Right cardiac atrium (tissue), 5 donors: ENCODE measurements at regions of chr1 and their contacts with region 1.

Region 1: DNA sequence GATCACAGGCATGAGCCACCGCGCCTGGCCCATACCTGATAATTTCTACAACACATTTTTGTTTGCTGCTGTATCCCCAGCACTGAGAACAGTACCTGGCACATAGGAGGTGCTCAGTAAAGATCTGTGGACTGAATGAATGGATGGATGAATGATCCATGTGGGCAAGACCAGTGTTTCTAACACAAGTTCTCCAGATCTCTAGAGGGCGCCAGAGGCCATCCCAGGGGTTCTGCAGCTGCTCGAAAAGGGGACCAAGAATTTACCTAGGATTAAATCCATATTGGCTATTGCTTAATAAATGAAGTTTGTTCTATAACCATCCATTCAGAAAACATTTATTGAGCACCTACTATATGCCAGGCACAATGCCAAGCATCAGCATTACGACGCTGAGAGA is 167.7 kb downstream of the ACTL8 start:
- DNase-seq: peak; percentile 28 to 59 (median 57)
- ATAC-seq: no peak
- H3K4me3 ChIP-seq: no peak overlapping the region
- H3K27ac ChIP-seq: no peak overlapping the region
- H3K4me1 ChIP-seq: no peaks in the 10 kb centered on the region
- H3K27me3 ChIP-seq: no peaks in the 10 kb centered on the region

Region 2: GRCh38 chr1:17439250-17440073 is 483.4 kb before region 1 on chr1 and contains the start of gene RCC2:
- intact Hi-C with region 1: no loop called
- DNase-seq: peak; percentile 79 to 91 (median 90)
- ATAC-seq: peak; percentile 83 to 88
- H3K4me3 ChIP-seq: peak within 1 kb of the TSS; percentile 99
- H3K27ac ChIP-seq: peak within 1 kb of the TSS; percentile 91
- H3K4me1 ChIP-seq: no peaks in the 10 kb centered on the region
- H3K27me3 ChIP-seq: no peaks in the 10 kb centered on the region
- total RNA-seq, gene RCC2: 12.1 to 19.0 (median 14.9) TPM

Region 3: GRCh38 chr1:17671741-17672140 is 251.1 kb before region 1 on chr1:
- intact Hi-C with region 1: loop called in 1 of 4 experiments (anchors 10 kb)
- DNase-seq: peak in 1 of 3 donors; percentile 51
- ATAC-seq: no peak
- H3K4me3 ChIP-seq: no peak overlapping the region
- H3K27ac ChIP-seq: no peak overlapping the region
- H3K4me1 ChIP-seq: peaks cover 3% of the 10 kb centered on the region
- H3K27me3 ChIP-seq: no peaks in the 10 kb centered on the region

Region 4: GRCh38 chr1:18072066-18072465 is 149.2 kb after region 1 on chr1:
- intact Hi-C with region 1: no loop called
- DNase-seq: no peak
- ATAC-seq: no peak
- H3K4me3 ChIP-seq: no peak overlapping the region
- H3K27ac ChIP-seq: no peak overlapping the region
- H3K4me1 ChIP-seq: no peaks in the 10 kb centered on the region
- H3K27me3 ChIP-seq: no peaks in the 10 kb centered on the region

Region 5: DNA sequence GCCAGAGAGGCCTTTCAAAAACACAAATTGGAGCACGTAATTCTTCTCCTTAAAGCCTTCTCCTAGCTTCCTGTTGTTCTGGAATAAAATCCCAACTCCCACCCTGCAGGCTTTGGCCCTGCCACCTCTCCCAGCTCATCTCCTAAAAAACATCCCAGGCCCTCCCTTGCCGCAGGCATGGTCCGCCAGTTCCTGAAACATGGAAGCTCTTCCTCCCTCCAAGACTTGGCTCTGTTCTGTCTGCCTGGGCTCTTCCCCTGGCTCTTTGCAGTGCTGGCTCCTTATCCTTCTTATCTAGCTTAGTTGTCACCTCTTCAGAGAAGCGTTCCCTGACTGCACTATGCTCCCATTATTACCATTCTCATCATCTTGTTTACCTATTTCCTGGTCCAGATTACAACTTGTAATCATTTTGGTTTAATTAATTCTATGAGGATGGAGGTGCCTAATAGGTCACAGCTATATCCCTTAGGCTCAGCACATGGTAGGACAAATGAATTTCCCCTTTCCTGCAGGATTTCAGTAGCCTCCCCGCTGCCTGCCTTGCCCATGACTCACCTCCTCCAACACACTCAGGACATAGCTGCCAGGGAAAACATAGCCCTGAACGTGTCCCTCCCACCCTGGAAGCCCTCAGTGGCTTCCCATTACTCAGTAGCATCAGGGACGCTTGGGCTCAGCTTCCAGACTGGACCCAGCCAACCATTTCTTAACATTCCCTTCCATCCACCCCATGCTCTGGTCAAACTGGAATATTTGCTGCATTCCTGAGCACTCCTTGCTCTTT is 169.0 kb after region 1 on chr1:
- intact Hi-C with region 1: loop called in 1 of 4 experiments (anchors 10 kb)
- DNase-seq: peak in 2 of 3 donors; percentile 57 to 64
- ATAC-seq: peak; percentile 59 to 94
- H3K4me3 ChIP-seq: no peak overlapping the region
- H3K27ac ChIP-seq: no peak overlapping the region
- H3K4me1 ChIP-seq: no peaks in the 10 kb centered on the region
- H3K27me3 ChIP-seq: no peaks in the 10 kb centered on the region

Region 6: DNA sequence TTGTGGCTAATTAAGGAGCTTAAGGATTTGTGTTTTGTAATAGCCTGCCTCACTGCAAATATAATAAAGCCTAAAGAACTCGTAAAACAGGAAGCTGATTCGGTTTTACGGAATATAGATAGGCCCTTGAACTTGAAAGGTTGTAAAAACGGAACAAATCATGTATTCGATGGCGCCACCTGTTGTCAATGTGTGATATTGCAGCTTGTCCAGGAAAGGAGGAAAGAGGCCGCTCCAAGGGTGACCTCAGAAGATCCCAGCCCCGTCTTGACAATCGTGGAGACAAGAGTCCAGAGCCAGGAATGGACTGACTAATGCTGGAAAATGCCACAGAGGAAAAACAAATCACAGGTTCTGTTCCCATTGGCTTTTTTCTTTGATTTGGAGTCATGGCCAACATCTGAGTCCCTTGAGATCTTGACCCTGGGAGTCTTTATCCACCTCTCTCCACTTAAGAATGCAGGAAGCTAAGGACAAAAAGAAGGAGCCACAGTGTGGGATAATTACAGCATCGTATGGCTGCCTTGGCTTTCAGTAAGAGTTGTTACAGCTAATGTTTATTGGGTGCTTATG is 177.7 kb after region 1 on chr1:
- intact Hi-C with region 1: loop called in 3 of 4 experiments (anchors 5 to 10 kb)
- DNase-seq: peak; percentile 60 to 79 (median 76)
- ATAC-seq: peak; percentile 59 to 79
- H3K4me3 ChIP-seq: no peak overlapping the region
- H3K27ac ChIP-seq: no peak overlapping the region
- H3K4me1 ChIP-seq: no peaks in the 10 kb centered on the region
- H3K27me3 ChIP-seq: no peaks in the 10 kb centered on the region

Region 7: GRCh38 chr1:18118078-18118477 is 195.2 kb after region 1 on chr1:
- intact Hi-C with region 1: no loop called
- DNase-seq: peak; percentile 38 to 77 (median 70)
- ATAC-seq: peak; percentile 55 to 61
- H3K4me3 ChIP-seq: no peak overlapping the region
- H3K27ac ChIP-seq: no peak overlapping the region
- H3K4me1 ChIP-seq: no peaks in the 10 kb centered on the region
- H3K27me3 ChIP-seq: no peaks in the 10 kb centered on the region

Region 8: GRCh38 chr1:18783705-18784481 is 861.1 kb after region 1 on chr1:
- intact Hi-C with region 1: loop called in 1 of 4 experiments (anchors 10 kb)
- DNase-seq: peak in 1 of 3 donors; percentile 62
- ATAC-seq: peak; percentile 59 to 71
- H3K4me3 ChIP-seq: no peak overlapping the region
- H3K27ac ChIP-seq: no peak overlapping the region
- H3K4me1 ChIP-seq: no peaks in the 10 kb centered on the region
- H3K27me3 ChIP-seq: no peaks in the 10 kb centered on the region